ENCODE measurements at regions of chr1 and their contacts with region 1.

Region 1: GRCh38 chr1:169106095-169106920 is at the start of gene ATP1B1:
- DNase-seq: peak; percentile 87
- H3K4me3 ChIP-seq: peak within 1 kb of the TSS; percentile 89 to 99 (median 94)
- H3K27ac ChIP-seq: peak within 1 kb of the TSS; percentile 89
- H3K4me1 ChIP-seq: peaks cover 35% of the 10 kb centered on the region
- H3K27me3 ChIP-seq: no peaks in the 10 kb centered on the region
- CTCF ChIP-seq: peak in 1 of 2 donors; percentile 44
- POLR2A ChIP-seq: peak; percentile 90
- total RNA-seq, gene ATP1B1: 56.1 and 60.5 TPM in 2 replicates

Region 2: DNA sequence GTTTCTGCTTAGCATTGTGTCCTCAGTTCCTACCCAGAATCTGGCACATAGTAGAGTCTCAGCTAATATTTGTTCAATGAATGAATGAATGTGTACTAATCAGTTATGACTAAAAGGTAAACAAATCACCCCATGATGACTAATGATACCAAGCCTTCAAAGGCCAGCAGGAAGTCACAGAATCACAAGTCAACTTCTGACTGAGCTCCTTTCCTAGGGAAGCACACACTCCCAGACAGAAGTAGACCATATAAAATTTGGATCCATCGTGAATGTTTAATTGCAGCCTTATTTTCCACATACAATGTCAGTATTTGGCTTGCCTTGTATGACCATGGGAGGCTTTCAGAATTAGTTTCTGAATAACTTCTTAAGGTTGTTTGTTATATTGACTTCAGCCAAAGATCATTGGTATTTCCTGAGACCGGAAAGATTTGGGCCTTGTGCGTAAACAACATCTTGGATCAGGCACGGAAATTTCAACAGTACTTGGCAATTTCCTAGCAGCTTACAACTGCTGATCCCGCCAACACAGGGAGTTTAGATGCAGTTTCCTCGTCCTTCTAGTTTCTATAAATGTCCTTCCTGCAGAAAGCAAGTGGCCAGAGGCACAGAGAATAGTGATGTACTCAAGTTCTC is 185.7 kb before region 1 on chr1:
- CTCF ChIA-PET with region 1: interaction called, 4 read pairs
- POLR2A ChIA-PET with region 1: no interaction called
- dilution Hi-C with region 1: no loop called
- intact Hi-C with region 1: loop called (anchors 1 kb)
- DNase-seq: peak; percentile 90
- H3K4me3 ChIP-seq: peak overlapping the region in 1 of 3 experiments; percentile 21
- H3K27ac ChIP-seq: peak overlapping the region; percentile 84
- H3K4me1 ChIP-seq: peaks cover 59% of the 10 kb centered on the region
- H3K27me3 ChIP-seq: no peaks in the 10 kb centered on the region
- CTCF ChIP-seq: no peak
- POLR2A ChIP-seq: no peak

Region 3: GRCh38 chr1:169149555-169150286 is 43.4 kb after region 1 on chr1:
- CTCF ChIA-PET with region 1: no interaction called
- POLR2A ChIA-PET with region 1: no interaction called
- dilution Hi-C with region 1: no loop called
- intact Hi-C with region 1: no loop called
- DNase-seq: no peak
- H3K4me3 ChIP-seq: no peak overlapping the region
- H3K27ac ChIP-seq: no peak overlapping the region
- H3K4me1 ChIP-seq: no peaks in the 10 kb centered on the region
- H3K27me3 ChIP-seq: no peaks in the 10 kb centered on the region
- CTCF ChIP-seq: no peak
- POLR2A ChIP-seq: no peak

Region 4: DNA sequence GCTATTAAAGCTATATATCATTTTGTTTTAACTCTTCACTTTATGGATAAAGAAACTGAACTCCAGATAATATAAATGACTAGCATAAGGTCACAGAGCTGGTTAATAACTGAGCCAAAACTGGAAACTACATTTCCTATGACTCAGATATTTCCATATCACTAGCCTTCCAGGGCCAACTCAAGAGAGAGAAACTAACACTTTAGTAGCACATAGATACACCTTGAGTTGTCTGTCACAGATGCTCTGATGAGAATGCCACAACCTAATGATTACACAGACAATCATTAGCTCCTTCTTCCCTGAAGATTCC is 220.6 kb after region 1 on chr1:
- CTCF ChIA-PET with region 1: no interaction called
- POLR2A ChIA-PET with region 1: no interaction called
- dilution Hi-C with region 1: no loop called
- intact Hi-C with region 1: loop called (anchors 5 kb)
- DNase-seq: peak; percentile 83
- H3K4me3 ChIP-seq: peak overlapping the region in 1 of 3 experiments; percentile 19
- H3K27ac ChIP-seq: peak overlapping the region; percentile 23
- H3K4me1 ChIP-seq: peaks cover 17% of the 10 kb centered on the region
- H3K27me3 ChIP-seq: no peaks in the 10 kb centered on the region
- CTCF ChIP-seq: no peak
- POLR2A ChIP-seq: no peak

Region 5: GRCh38 chr1:169485544-169486278 is 379.4 kb after region 1 on chr1 and contains the start of gene SLC19A2:
- CTCF ChIA-PET with region 1: no interaction called
- POLR2A ChIA-PET with region 1: no interaction called
- dilution Hi-C with region 1: no loop called
- intact Hi-C with region 1: loop called (anchors 2 kb)
- DNase-seq: peak; percentile 99
- H3K4me3 ChIP-seq: peak within 1 kb of the TSS; percentile 37 to 80 (median 78)
- H3K27ac ChIP-seq: peak within 1 kb of the TSS; percentile 96
- H3K4me1 ChIP-seq: peaks cover 31% of the 10 kb centered on the region
- H3K27me3 ChIP-seq: no peaks in the 10 kb centered on the region
- CTCF ChIP-seq: peak in 1 of 2 donors; percentile 31
- POLR2A ChIP-seq: peak; percentile 87
- total RNA-seq, gene SLC19A2: 5.4 and 7.0 TPM in 2 replicates